Activated CD4-positive, alpha-beta T cell treated with anti-CD3 and anti-CD28 coated beads for 36 hours (primary cell): ENCODE measurements at regions of chr13 and their contacts with region 1.

Region 1: DNA sequence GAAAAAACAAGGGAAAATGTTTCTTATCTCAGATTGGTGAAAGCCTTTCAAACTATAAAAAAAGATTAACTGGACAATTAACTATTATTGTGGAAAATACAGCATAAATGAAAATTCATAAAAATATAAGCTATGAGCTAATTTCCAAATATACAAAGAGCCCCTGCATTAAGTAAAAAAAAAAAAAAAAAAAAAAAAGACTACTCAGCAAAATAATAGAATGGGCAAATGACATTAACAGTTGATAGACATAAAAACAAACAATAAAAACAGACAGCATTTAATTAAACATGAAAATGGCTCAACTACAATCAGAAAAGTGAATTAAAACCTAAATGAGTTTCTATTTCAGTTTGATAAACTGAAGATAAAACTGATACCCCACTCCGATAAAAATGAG is 77.5 kb downstream of the RBM26 start:
- DNase-seq: no peak
- ATAC-seq: no peak
- H3K4me3 Mint-ChIP-seq: no peak overlapping the region
- H3K27ac Mint-ChIP-seq: no peak overlapping the region
- H3K4me1 Mint-ChIP-seq: peaks cover 5% of the 10 kb centered on the region
- H3K27me3 Mint-ChIP-seq: no peaks in the 10 kb centered on the region

Region 2: GRCh38 chr13:78802912-78803311 is 525.6 kb before region 1 on chr13:
- CTCF ChIA-PET with region 1: no interaction called
- POLR2A ChIA-PET with region 1: no interaction called
- intact Hi-C with region 1: no loop called
- DNase-seq: no peak
- ATAC-seq: no peak
- H3K4me3 Mint-ChIP-seq: no peak overlapping the region
- H3K27ac Mint-ChIP-seq: no peak overlapping the region
- H3K4me1 Mint-ChIP-seq: no peaks in the 10 kb centered on the region
- H3K27me3 Mint-ChIP-seq: peaks cover 6% of the 10 kb centered on the region

Region 3: DNA sequence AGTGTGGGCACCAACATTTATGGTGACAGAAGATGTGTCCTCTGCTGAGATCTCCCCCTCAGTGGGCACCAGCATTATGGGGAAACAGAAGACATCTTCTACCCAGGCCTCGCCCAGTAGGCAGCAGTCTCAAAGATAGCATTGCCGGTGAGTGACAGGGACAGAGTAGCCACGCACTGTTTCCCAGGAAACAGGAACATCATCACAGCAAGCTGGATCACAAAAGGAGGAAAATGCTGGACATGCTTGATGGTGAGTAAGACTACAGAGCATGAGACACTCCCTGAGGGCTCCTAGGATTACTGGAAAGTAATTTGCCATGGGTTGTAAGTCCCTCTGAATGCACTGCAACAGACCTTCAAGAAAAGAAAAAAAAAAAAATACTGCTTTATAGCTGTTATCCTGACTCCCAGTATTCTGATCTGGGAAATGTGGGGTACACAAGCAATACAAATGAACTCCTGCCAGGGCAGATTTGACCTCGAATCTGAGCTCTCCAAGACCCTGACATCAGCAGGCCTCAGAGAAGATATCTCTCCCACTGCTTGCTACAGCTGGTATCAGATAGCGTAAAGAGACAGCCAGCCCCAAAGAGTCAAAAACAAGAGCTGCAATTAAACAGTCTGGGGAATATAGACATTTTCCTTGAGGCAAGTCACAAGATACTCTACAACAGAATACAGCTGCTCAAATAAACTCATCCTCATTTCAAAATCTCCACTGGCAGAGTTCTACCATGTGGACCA is 102.8 kb before region 1 on chr13:
- CTCF ChIA-PET with region 1: no interaction called
- POLR2A ChIA-PET with region 1: interaction called, 13 read pairs
- intact Hi-C with region 1: no loop called
- DNase-seq: no peak
- ATAC-seq: no peak
- H3K4me3 Mint-ChIP-seq: no peak overlapping the region
- H3K27ac Mint-ChIP-seq: no peak overlapping the region
- H3K4me1 Mint-ChIP-seq: no peaks in the 10 kb centered on the region
- H3K27me3 Mint-ChIP-seq: peaks cover 4% of the 10 kb centered on the region

Region 4: GRCh38 chr13:79307866-79308298 is 20.6 kb before region 1 on chr13:
- CTCF ChIA-PET with region 1: no interaction called
- POLR2A ChIA-PET with region 1: no interaction called
- intact Hi-C with region 1: no loop called
- DNase-seq: peak; percentile 31
- ATAC-seq: peak; percentile 66
- H3K4me3 Mint-ChIP-seq: no peak overlapping the region
- H3K27ac Mint-ChIP-seq: no peak overlapping the region
- H3K4me1 Mint-ChIP-seq: peaks cover 11% of the 10 kb centered on the region
- H3K27me3 Mint-ChIP-seq: peaks cover 2% of the 10 kb centered on the region

Region 5: GRCh38 chr13:80297094-80297493 is 968.6 kb after region 1 on chr13:
- CTCF ChIA-PET with region 1: no interaction called
- POLR2A ChIA-PET with region 1: no interaction called
- intact Hi-C with region 1: no loop called
- DNase-seq: no peak
- ATAC-seq: no peak
- H3K4me3 Mint-ChIP-seq: no peak overlapping the region
- H3K27ac Mint-ChIP-seq: no peak overlapping the region
- H3K4me1 Mint-ChIP-seq: no peaks in the 10 kb centered on the region
- H3K27me3 Mint-ChIP-seq: no peaks in the 10 kb centered on the region